HepG2 (cell line): ENCODE measurements at regions of chr1 and their contacts with region 1.

Region 1: GRCh38 chr1:212608209-212608955 is at the start of gene ATF3:
- DNase-seq: peak; percentile 95
- ATAC-seq: peak; percentile 88
- H3K4me3 ChIP-seq: peak within 1 kb of the TSS; percentile 76 to 83 (median 77)
- H3K27ac ChIP-seq: peak within 1 kb of the TSS; percentile 60
- H3K4me1 ChIP-seq: peaks cover 48% of the 10 kb centered on the region
- H3K27me3 ChIP-seq: peaks cover 11 to 42% of the 10 kb centered on the region in 2 experiments
- CTCF ChIP-seq: peak; percentile 25; the same call in 1 of the 2 replicates
- EP300 ChIP-seq: peak in 1 of 2 experiments; percentile 27; a peak in 1 of 4 replicates
- POLR2A ChIP-seq: peak; percentile 98 to 99
- RAD21 ChIP-seq: no peak
- total RNA-seq, gene ATF3: 3.6 and 5.0 TPM in 2 replicates

Region 2: DNA sequence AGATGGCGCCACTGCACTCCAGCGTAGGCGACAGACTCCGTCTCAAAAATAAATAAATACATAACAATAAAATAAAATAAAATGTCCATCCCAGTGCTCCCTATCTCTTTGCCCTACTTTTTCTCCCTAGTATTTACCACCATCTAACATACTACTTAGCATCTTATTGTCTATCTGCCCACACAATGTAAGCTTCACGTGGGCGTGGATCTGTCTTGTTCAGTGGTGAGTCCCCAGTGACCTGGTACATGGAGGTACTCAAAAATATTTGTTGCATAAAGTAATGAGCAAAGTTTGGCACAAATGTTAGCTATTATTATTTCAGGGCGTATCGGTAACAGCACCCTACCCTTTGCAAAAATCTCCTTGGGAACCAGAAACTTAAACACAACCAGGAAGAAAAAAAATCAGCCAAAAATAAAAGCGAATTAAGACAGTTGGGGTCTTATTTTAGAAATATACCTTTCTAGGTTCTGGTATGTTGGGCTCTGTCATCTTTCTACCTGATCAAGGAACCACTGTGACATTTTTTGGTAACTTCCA is 176.1 kb before region 1 on chr1:
- CTCF ChIA-PET with region 1: no interaction called
- POLR2A ChIA-PET with region 1: no interaction called
- in situ Hi-C with region 1: no loop called
- intact Hi-C with region 1: no loop called
- DNase-seq: no peak
- ATAC-seq: no peak
- H3K4me3 ChIP-seq: peak overlapping the region; percentile 58 to 93 (median 86)
- H3K27ac ChIP-seq: no peak overlapping the region
- H3K4me1 ChIP-seq: peaks cover 39% of the 10 kb centered on the region
- H3K27me3 ChIP-seq: peaks cover 0 to 7% of the 10 kb centered on the region in 2 experiments; a peak in 2 of 5 replicates
- CTCF ChIP-seq: no peak
- EP300 ChIP-seq: no peak
- POLR2A ChIP-seq: no peak
- RAD21 ChIP-seq: no peak

Region 3: GRCh38 chr1:212558693-212559480 is 49.5 kb before region 1 on chr1:
- CTCF ChIA-PET with region 1: no interaction called
- POLR2A ChIA-PET with region 1: interaction called, 20 read pairs
- in situ Hi-C with region 1: no loop called
- intact Hi-C with region 1: no loop called
- DNase-seq: peak; percentile 47
- ATAC-seq: peak; percentile 86
- H3K4me3 ChIP-seq: peak overlapping the region; percentile 45 to 72 (median 62)
- H3K27ac ChIP-seq: no peak overlapping the region
- H3K4me1 ChIP-seq: peaks cover 10% of the 10 kb centered on the region
- H3K27me3 ChIP-seq: peaks cover 6 to 10% of the 10 kb centered on the region in 2 experiments; a peak in 3 of 5 replicates
- CTCF ChIP-seq: no peak
- EP300 ChIP-seq: no peak
- POLR2A ChIP-seq: no peak
- RAD21 ChIP-seq: no peak

Region 4: DNA sequence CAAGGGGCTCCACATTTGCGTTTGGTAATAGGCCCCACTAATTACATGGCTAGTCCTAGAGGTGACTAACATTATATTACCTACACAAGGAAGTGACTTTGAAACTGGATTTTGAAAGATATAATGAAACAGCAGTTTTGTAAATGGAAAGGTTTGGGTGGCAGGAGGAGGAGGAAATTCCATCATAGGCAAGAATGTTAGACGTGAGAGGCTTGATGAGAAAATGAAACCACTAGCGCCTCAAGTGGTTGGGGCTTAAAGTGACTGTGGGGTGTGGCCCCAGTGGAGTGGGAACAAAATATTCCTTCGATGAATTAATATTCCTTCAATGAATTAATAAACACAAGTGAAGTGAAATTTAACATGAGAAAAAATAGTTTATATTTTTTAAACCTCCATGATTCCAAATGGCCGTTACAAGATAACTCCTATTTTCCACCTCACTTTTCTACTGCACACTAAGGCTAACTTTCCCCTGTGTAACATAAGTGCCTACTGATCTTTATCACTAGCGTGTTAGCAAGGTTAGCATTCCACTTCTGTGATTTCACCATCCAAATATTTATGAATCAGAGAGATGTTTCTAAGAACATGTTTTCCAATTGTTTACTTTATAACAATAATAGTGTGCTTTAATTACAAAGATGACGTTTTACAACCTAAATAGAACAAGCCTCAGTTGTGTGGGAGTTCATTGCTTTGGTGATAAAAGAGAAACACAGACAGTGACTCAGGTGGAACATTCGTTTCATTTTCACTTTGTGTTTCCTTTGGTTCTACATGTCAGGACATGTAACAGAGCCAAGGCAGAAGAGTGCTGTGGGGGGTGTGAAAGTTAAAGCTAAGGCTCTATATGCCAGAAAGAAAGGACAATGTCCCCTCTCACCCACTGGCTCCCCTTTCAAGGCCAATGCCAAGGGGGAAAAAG is 12.3 kb before region 1 on chr1:
- CTCF ChIA-PET with region 1: no interaction called
- POLR2A ChIA-PET with region 1: interaction called, 33 read pairs
- in situ Hi-C with region 1: no loop called
- intact Hi-C with region 1: no loop called
- DNase-seq: peak; percentile 73
- ATAC-seq: peak; percentile 59
- H3K4me3 ChIP-seq: peak overlapping the region in 1 of 3 experiments; percentile 24; a peak in 1 of 6 replicates
- H3K27ac ChIP-seq: peak overlapping the region; percentile 10
- H3K4me1 ChIP-seq: peaks cover 36% of the 10 kb centered on the region
- H3K27me3 ChIP-seq: peaks cover 0 to 12% of the 10 kb centered on the region in 2 experiments; a peak in 2 of 5 replicates
- CTCF ChIP-seq: no peak
- EP300 ChIP-seq: no peak; a peak in 1 of 4 replicates
- POLR2A ChIP-seq: no peak
- RAD21 ChIP-seq: no peak